ENCODE measurements at regions of chr11 and their contacts with region 1.

Region 1: GRCh38 chr11:85464283-85464682 is 162.9 kb downstream of the DLG2 start:
- DNase-seq: no peak
- ATAC-seq: no peak
- H3K4me3 ChIP-seq: no peak overlapping the region
- H3K27ac ChIP-seq: no peak overlapping the region
- H3K4me1 ChIP-seq: no peaks in the 10 kb centered on the region
- H3K27me3 ChIP-seq: no peaks in the 10 kb centered on the region
- CTCF ChIP-seq: peak in 8 of 12 donors; percentile 11 to 49 (median 25)
- POLR2A ChIP-seq: no peak

Region 2: DNA sequence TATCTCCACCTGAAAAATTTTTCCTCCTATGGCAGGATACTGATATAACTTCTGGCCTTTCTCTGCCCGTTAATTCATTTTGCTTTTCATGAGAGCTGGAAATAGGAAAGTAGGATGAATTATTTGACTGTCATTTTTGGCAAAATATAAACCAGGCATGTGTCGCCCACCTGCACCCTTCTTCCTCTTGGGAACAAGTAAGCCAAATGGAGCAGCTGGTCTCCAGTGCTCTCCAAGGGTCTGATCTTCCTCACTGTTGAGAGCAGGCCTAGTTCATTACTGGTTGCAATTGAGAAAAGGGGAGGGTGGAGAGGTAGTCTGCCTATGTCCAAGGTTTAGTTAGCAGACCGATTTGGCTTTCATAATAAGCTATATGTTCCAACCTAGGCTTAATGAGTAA is 419.4 kb before region 1 on chr11:
- intact Hi-C with region 1: no loop called
- DNase-seq: no peak
- ATAC-seq: no peak
- H3K4me3 ChIP-seq: no peak overlapping the region
- H3K27ac ChIP-seq: no peak overlapping the region
- H3K4me1 ChIP-seq: no peaks in the 10 kb centered on the region
- H3K27me3 ChIP-seq: no peaks in the 10 kb centered on the region
- CTCF ChIP-seq: no peak
- POLR2A ChIP-seq: no peak

Region 3: DNA sequence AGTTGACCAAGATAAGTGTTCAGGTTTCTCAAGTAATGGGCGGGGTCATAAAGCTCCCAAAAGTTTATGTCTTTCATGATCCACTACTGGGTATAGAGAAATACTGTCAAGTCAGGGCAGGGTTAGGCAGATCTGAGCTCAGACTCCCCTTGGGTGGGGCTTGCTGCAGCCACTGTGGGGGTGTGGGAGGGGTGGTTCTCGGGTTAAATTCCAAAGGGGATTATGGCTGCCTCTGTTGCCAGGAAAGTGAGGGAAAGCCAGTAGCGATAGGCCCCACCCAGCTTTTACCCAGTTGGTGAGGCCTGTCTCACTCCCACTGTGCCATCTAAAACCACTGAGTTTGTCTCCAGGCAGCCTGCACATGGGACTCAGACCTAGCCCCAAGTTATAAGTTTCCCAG is 125.1 kb after region 1 on chr11:
- intact Hi-C with region 1: loop called in 2 of 10 experiments (anchors 5 kb)
- DNase-seq: no peak
- ATAC-seq: no peak
- H3K4me3 ChIP-seq: no peak overlapping the region
- H3K27ac ChIP-seq: no peak overlapping the region
- H3K4me1 ChIP-seq: no peaks in the 10 kb centered on the region
- H3K27me3 ChIP-seq: no peaks in the 10 kb centered on the region
- CTCF ChIP-seq: no peak
- POLR2A ChIP-seq: no peak

Measured in heart left ventricle (tissue), 16 donors.